MCF 10A (cell line): ENCODE measurements at regions of chr20 and their contacts with region 1.

Region 1: DNA sequence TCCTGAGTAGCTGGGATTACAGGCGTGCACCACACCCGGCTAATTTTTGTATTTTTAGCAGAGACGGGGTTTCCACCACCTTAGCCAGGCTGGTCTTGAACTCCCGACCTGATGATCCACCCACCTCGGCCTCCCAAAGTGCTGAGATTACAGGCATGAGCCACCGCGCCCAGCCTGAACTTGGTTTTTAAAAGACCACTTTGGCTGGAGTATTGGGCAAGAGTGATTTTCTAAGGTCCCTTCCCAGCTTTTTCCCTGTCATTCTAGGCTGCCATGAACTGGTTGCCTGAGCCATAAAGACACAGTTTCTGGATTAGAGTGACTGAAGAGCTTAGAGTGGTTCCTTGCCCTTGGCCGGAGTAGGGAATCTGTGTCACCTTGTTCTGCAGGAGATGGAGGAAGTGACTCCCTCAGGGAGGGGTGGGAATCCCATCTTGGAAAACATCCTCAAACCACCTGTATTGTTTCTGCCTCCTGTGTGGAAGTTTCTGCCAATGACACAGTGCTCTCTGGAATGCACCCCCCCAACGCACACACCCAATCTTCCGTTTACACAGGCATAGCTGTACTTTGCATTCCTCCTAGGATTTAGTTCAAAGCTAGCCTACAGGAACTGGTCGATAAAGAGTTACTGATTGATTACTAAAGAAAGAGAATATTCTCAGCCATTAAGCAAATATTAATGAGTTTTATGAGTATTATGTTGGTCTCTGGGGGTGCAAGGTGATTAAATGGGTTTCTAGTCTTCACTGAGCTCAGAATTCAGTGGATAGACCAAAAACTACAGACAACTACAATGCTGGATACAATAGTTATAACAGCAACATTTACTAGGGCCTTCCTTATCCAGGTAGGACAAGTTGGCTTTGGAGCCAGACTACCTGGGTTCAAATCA is 18.2 kb downstream of the BCL2L1 start:
- DNase-seq: peak; percentile 84
- H3K4me3 Mint-ChIP-seq: peak overlapping the region; percentile 7
- H3K27ac Mint-ChIP-seq: peak overlapping the region; percentile 92
- H3K4me1 Mint-ChIP-seq: peaks cover 58% of the 10 kb centered on the region
- H3K27me3 Mint-ChIP-seq: no peaks in the 10 kb centered on the region
- CTCF ChIP-seq: no peak

Region 2: GRCh38 chr20:31430568-31431115 is 273.8 kb before region 1 on chr20:
- CTCF ChIA-PET with region 1: no interaction called
- POLR2A ChIA-PET with region 1: no interaction called
- intact Hi-C with region 1: no loop called
- DNase-seq: no peak
- H3K4me3 Mint-ChIP-seq: no peak overlapping the region
- H3K27ac Mint-ChIP-seq: no peak overlapping the region
- H3K4me1 Mint-ChIP-seq: no peaks in the 10 kb centered on the region
- H3K27me3 Mint-ChIP-seq: peaks cover 46% of the 10 kb centered on the region
- CTCF ChIP-seq: no peak

Region 3: DNA sequence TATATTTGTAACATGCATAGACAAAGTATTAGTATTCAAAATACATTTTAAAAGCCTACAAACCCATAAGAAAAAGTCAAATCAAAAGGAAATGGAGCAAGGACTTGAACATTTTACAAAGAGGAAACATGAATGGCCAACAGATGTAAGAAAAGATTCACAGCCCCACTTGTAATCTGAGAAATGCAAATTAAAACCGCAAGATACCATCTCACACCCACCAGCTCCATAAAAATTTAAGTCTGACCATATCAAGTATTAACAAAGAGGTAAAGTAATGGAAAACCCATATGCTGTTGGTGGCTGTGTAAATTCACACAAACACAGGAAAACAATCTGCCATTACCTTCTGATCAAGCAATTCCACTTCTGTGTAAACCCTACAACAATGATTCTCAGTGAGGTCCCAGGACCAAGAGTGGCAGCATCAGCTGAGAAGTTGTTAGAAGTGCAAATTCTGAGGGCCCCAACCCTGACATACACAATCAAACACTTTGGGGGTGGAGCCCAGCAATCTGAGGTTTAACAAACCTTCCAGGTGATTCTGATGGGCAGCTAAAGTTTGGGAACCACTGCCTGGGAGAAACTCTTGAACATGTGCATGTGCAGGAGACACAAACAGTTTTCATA is 12.7 kb before region 1 on chr20:
- CTCF ChIA-PET with region 1: interaction called, 6 read pairs
- POLR2A ChIA-PET with region 1: interaction called, 238 read pairs
- intact Hi-C with region 1: no loop called
- DNase-seq: no peak
- H3K4me3 Mint-ChIP-seq: no peak overlapping the region
- H3K27ac Mint-ChIP-seq: peak overlapping the region; percentile 31
- H3K4me1 Mint-ChIP-seq: peaks cover 34% of the 10 kb centered on the region
- H3K27me3 Mint-ChIP-seq: no peaks in the 10 kb centered on the region
- CTCF ChIP-seq: no peak

Region 4: DNA sequence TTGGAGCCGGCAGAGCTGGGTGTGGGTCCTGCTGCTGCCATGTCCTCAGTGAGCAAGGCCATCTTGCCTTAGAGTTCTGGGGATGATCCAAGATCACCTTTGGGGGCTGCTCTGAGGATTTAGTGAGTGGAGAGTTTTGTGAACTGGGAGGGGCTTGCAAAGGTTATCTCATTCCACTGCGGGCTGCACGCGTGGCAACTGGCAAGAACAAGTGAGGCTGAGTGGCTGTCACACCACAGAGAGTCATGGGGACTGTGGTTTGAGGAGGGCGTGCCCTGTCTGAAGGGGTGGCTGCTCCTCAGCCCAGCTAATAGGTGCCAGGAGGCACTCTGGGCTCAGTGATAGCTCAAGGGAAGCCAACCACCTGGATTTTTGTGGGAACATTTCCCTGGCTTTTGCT is 203.5 kb after region 1 on chr20:
- CTCF ChIA-PET with region 1: no interaction called
- POLR2A ChIA-PET with region 1: no interaction called
- intact Hi-C with region 1: no loop called
- DNase-seq: no peak
- H3K4me3 Mint-ChIP-seq: no peak overlapping the region
- H3K27ac Mint-ChIP-seq: no peak overlapping the region
- H3K4me1 Mint-ChIP-seq: no peaks in the 10 kb centered on the region
- H3K27me3 Mint-ChIP-seq: peaks cover 20% of the 10 kb centered on the region
- CTCF ChIP-seq: no peak